BJ (cell line): ENCODE measurements at regions of chr16 and their contacts with region 1.

Region 1: GRCh38 chr16:71610936-71611871 is 14.8 kb upstream of the MARVELD3 start:
- DNase-seq: no peak
- H3K4me3 ChIP-seq: no peak overlapping the region
- H3K27me3 ChIP-seq: peaks cover 2% of the 10 kb centered on the region; the same call in 1 of the 2 replicates
- CTCF ChIP-seq: peak; percentile 96

Region 2: GRCh38 chr16:71520555-71520954 is 90.6 kb before region 1 on chr16:
- CTCF ChIA-PET with region 1: no interaction called
- POLR2A ChIA-PET with region 1: no interaction called
- DNase-seq: no peak
- H3K4me3 ChIP-seq: no peak overlapping the region
- H3K27me3 ChIP-seq: no peaks in the 10 kb centered on the region
- CTCF ChIP-seq: no peak

Region 3: DNA sequence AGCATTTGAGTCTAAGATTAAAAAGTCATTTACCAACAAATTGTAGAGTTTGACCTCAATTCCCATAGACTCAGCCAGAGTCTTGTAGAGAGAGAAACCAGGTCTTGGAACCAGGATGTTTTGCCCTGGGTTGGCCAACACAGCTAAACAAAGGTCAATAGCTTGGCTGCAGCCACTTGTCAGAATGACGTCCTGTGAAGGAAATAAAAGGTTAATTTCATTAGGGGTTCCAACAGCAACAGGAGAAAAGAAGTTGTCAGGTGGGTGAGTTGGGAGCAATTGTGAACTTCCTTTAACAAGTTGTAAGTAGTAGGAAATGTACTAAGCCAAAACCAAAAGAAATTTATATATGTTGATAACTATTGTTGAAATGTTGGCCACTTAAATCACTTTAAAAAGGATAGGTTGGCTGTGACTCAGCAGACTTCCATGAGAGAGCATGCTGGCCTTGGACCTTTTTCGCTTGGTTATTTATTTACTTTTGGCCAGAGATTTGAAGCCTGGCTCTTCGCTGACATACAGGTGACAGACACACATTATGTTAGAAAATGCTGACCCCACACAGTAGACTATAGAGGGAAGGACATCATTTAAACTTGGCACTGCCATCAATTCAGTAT is 38.6 kb before region 1 on chr16:
- CTCF ChIA-PET with region 1: interaction called, 12 read pairs
- POLR2A ChIA-PET with region 1: no interaction called
- DNase-seq: no peak
- H3K4me3 ChIP-seq: no peak overlapping the region
- H3K27me3 ChIP-seq: no peaks in the 10 kb centered on the region; the same call in 1 of the 2 replicates
- CTCF ChIP-seq: no peak

Region 4: GRCh38 chr16:71594000-71594646 is 17.1 kb before region 1 on chr16:
- CTCF ChIA-PET with region 1: interaction called, 15 read pairs
- POLR2A ChIA-PET with region 1: no interaction called
- DNase-seq: no peak
- H3K4me3 ChIP-seq: no peak overlapping the region
- H3K27me3 ChIP-seq: no peaks in the 10 kb centered on the region
- CTCF ChIP-seq: no peak

Region 5: GRCh38 chr16:71600822-71601221 is 10.4 kb before region 1 on chr16:
- CTCF ChIA-PET with region 1: interaction called, 15 read pairs
- POLR2A ChIA-PET with region 1: no interaction called
- DNase-seq: no peak
- H3K4me3 ChIP-seq: no peak overlapping the region
- H3K27me3 ChIP-seq: no peaks in the 10 kb centered on the region
- CTCF ChIP-seq: no peak

Region 6: DNA sequence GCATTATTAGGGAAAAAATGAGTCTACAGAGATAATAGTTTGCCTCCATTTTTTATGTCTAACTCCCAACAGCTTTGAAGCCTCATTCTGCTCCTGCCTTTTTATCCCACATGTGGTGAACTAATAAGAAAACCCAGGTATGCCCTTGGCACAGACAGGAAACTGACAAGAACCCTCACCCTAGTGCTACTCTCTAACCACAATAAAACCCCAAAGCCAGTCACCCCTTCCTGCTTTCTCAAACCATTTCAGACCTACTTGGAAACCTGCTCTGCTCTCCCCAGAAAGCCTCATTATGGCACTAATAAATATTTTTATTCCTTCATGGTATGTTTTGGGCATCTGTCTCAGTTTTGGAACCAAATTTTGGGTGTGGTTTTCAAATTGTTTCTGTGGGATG is 10.9 kb after region 1 on chr16:
- CTCF ChIA-PET with region 1: interaction called, 14 read pairs
- POLR2A ChIA-PET with region 1: no interaction called
- DNase-seq: no peak
- H3K4me3 ChIP-seq: no peak overlapping the region
- H3K27me3 ChIP-seq: peaks cover 11% of the 10 kb centered on the region
- CTCF ChIP-seq: no peak

Region 7: DNA sequence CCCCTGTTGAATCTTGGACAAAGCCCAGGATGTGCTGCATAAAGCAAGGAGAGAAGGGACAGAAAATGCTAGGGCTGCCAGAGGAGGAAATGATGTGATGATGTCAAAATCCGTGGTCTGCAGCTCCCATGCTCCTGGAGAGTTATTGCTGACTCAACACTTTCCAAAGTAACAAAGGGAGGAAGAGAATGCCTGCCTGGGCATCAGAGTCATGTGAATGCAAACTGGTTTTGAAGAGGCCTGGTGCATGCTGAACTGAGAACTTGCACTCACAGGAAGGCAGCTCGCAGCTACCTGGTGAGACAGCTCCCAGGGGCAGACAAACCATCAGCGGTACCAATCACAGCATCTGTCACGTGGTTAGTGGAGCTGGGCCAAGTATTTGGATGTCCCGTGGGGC is 17.6 kb after region 1 on chr16:
- CTCF ChIA-PET with region 1: interaction called, 14 read pairs
- POLR2A ChIA-PET with region 1: no interaction called
- DNase-seq: no peak
- H3K4me3 ChIP-seq: no peak overlapping the region
- H3K27me3 ChIP-seq: peaks cover 15% of the 10 kb centered on the region
- CTCF ChIP-seq: no peak

Region 8: DNA sequence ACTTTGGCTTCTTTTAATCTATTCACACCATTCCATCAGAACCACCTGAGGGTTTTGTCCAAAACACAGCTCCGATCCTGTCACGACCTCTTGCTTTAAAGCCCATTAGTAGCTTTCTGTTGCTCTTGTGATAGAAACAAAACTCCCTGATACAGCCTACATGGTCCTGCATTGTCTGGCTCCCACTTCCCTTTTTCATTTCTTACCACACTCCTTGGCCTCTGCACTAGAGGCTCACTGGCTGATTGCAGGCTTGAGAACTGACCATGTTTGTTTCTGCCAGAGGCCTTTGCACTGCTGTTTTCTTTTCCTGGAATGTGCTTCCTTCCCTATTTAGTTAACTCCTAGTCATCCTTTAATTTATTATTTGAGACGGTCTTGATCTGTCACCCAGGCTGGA is 307.8 kb after region 1 on chr16:
- CTCF ChIA-PET with region 1: no interaction called
- POLR2A ChIA-PET with region 1: no interaction called
- DNase-seq: no peak
- H3K4me3 ChIP-seq: no peak overlapping the region
- H3K27me3 ChIP-seq: no peaks in the 10 kb centered on the region
- CTCF ChIP-seq: no peak